PC-3 (cell line): ENCODE measurements at regions of chr13 and their contacts with region 1.

Region 1: GRCh38 chr13:28872427-28873176 is 52.5 kb downstream of the MTUS2 start:
- DNase-seq: no peak
- ATAC-seq: no peak
- H3K4me3 ChIP-seq: no peak overlapping the region
- H3K27ac ChIP-seq: no peak overlapping the region
- H3K4me1 ChIP-seq: no peaks in the 10 kb centered on the region
- H3K27me3 ChIP-seq: no peaks in the 10 kb centered on the region
- CTCF ChIP-seq: no peak

Region 2: DNA sequence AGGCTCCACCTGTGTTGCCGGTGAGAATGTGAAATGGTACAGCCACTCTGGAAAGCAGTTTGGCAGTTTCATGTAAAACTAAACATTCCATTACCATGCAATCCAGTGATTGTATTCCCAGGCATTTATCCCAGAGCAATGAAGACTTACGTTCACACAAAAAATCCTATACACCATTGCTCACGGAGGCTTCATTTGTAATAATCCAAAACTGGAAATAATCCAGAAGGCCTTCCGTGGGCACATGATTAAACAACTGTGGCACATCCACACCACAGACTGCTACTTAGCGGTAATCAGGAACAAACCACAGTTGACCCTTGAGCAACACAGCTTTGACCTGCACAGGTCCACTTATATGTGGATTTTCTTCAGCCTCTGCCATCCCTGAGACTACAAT is 287.3 kb after region 1 on chr13:
- CTCF ChIA-PET with region 1: no interaction called
- POLR2A ChIA-PET with region 1: no interaction called
- intact Hi-C with region 1: loop called (anchors 10 kb)
- DNase-seq: no peak
- ATAC-seq: no peak
- H3K4me3 ChIP-seq: no peak overlapping the region
- H3K27ac ChIP-seq: no peak overlapping the region
- H3K4me1 ChIP-seq: no peaks in the 10 kb centered on the region
- H3K27me3 ChIP-seq: peaks cover 16% of the 10 kb centered on the region; the same call in 1 of the 2 replicates
- CTCF ChIP-seq: no peak